ENCODE measurements at regions of chr1 and their contacts with region 1.

Region 1: DNA sequence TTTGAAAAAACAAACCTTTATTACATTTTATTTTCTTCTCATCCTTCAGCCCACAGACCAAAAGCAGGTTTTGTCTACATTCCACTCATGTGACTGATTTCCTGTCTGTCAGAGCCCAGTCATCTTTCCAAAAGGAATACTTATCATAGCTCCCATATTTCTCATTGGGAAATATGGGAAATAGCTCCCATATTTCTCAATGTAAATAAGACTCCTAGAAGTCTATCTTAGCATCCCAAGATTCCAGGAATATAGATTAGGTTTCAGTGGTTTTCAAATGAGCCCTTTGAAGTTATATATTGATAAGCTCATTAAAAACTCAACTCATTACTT is 19.1 kb upstream of the NRDC start:
- DNase-seq: no peak
- H3K4me3 Mint-ChIP-seq: no peak overlapping the region
- H3K27ac Mint-ChIP-seq: no peak overlapping the region
- H3K4me1 Mint-ChIP-seq: peaks cover 2% of the 10 kb centered on the region
- H3K27me3 Mint-ChIP-seq: peaks cover 25% of the 10 kb centered on the region

Region 2: DNA sequence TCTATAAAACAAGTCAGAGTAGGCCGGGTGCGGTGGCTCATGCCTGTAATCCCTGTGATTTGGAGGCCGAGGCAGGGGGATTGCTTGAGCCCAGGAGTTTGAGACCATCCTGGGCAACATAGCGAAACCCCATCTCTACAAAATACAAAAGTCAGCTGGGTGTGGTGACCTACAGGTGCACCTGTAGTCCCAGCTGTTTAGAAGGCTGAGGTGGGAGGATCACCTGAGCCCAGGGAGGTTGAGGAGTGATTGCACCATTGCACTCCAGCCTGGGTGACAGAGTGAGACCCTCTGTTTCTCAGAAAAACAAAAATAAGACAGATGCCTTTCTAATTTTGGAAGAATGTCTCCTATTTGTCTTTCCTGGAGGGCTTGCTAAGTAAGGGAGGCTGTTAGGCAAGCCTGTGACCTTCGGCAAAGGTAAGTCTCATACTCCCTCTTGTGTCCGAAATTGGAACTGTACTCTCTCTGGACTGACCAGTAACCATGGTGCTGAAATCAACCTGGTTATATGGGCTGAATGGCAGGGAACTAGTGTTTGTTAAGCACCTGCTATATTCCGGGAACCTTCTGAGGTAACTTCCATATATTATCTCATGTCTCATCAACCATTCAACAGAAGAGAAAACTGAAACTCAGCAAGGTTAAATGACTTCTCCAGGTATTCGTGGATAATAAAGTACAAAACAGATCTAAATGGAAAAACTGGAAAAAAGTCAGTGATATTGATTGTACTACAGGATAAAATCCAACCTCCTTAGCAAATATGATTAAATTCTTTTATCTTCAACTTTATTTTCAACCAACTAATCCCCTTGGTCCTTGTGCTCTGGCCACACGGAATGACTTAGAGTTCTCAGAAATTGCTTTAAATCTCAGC is 104.6 kb after region 1 on chr1:
- intact Hi-C with region 1: loop called (anchors 1 kb)
- DNase-seq: peak; percentile 93
- H3K4me3 Mint-ChIP-seq: no peak overlapping the region
- H3K27ac Mint-ChIP-seq: no peak overlapping the region
- H3K4me1 Mint-ChIP-seq: no peaks in the 10 kb centered on the region
- H3K27me3 Mint-ChIP-seq: peaks cover 25% of the 10 kb centered on the region

Region 3: DNA sequence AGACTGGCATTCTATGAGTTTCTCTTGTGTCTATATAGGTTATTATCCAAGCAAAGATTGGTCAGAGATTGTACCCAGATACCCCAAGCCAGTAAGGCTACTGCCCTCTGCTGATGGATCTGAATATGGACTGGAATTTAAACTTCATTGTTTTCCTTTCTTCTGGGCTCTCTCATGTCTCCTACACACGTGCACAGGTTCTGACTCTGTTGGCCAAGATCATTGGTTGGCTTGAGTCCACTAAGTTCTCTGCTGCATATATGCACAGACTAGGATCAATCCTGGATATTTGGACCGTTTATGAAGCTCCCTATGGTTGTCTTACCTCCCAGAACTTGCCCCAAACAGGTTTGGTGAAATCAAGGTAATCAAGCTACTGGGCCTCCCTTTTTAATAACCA is 398.7 kb after region 1 on chr1:
- intact Hi-C with region 1: loop called (anchors 10 kb)
- DNase-seq: peak; percentile 60
- H3K4me3 Mint-ChIP-seq: no peak overlapping the region
- H3K27ac Mint-ChIP-seq: no peak overlapping the region
- H3K4me1 Mint-ChIP-seq: no peaks in the 10 kb centered on the region
- H3K27me3 Mint-ChIP-seq: peaks cover 2% of the 10 kb centered on the region

Measured in activated CD4-positive, alpha-beta T cell treated with anti-CD3 and anti-CD28 coated beads, Interleukin-2, amount 10 ng/mL, durations not matched to agents 24 days and 14 days (primary cell).